Mammary epithelial cell (primary cell): ENCODE measurements at regions of chr10 and their contacts with region 1.

Region 1: DNA sequence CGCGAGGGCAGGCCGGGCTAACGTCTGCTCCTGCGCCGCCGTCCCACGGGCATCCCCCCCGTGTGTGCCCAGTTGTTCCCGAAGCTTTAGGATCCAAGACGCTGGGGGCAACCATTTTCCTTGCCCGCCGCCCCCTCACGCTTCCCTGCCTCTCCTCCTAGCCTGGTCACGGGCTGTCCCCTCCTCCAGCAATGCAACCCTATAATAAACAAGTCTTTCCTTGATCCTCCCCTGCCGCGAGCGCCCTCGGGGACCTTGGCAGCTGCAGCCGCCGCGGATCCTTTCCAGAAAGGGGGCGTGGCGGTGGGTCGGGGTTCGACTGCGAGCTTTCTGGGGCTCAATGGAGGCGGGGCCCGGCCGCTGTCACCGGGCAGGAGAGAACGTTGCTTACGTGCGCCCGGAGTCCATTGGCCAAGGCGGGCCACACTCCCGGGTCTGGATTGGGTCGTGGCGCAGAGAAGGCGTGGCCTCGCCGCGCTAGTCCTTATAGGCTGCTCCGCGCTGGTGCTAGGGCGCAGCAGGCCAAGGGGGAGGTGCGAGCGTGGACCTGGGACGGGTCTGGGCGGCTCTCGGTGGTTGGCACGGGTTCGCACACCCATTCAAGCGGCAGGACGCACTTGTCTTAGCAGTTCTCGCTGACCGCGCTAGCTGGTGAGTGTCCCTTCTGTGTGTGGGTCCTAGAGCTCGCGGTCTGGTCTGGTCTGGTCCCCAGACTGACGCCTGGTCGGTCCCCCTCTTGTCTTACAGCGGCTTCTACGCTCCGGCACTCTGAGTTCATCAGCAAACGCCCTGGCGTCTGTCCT is at the start of gene DDIT4:
- DNase-seq: peak; percentile 99
- H3K4me3 ChIP-seq: peak within 1 kb of the TSS; percentile 59 to 78 (median 66)
- H3K27ac ChIP-seq: peak within 1 kb of the TSS; percentile 93
- H3K4me1 ChIP-seq: peaks cover 27% of the 10 kb centered on the region
- H3K27me3 ChIP-seq: no peaks in the 10 kb centered on the region
- CTCF ChIP-seq: no peak
- total RNA-seq, gene DDIT4: 772 to 1,235 TPM

Region 2: DNA sequence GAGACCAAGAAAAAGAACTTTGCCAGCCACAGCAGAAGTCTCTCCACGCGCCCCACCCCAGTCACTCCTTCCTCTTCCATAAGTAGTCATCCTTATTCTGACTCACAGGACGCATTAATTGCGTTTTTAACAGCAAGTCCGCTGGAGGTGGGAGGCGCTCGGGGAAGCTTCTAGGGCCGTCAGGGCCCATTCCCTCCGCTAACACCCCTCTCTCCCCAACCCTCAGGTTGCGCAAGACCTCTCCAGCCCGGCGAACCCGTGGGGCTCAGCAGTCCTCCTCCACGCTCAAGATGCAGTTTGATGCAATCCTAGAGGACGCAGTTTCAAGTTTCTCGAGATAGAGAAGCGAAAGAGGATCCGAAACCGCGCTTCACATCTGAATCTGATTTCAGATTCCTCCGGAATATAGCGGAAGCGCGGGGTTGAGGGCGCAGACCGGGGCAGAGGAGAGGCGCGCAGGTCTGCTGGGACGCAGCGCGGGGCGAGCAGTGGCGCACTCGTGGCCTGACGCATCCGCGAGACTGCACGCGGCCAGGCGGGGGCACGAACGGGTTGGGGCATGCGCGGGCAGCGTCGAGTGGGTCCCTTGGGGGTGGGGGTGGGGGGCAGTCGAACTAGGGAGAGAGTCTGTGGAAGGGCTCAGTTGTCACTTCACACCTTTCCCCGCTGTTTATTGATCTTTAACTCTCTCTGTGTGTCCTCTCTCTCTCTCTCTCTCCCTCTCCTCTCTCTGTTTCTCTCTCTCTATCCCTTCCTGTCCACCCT is 384.8 kb before region 1 on chr10:
- CTCF ChIA-PET with region 1: no interaction called
- dilution Hi-C with region 1: no loop called
- in situ Hi-C with region 1: no loop called
- intact Hi-C with region 1: no loop called
- DNase-seq: peak; percentile 78
- H3K4me3 ChIP-seq: peak overlapping the region; percentile 56 to 59 (median 56)
- H3K27ac ChIP-seq: peak overlapping the region; percentile 84
- H3K4me1 ChIP-seq: peaks cover 12% of the 10 kb centered on the region
- H3K27me3 ChIP-seq: no peaks in the 10 kb centered on the region
- CTCF ChIP-seq: no peak

Region 3: GRCh38 chr10:72223743-72224101 is 49.9 kb before region 1 on chr10:
- CTCF ChIA-PET with region 1: interaction called, 3 read pairs
- dilution Hi-C with region 1: no loop called
- in situ Hi-C with region 1: no loop called
- intact Hi-C with region 1: loop called (anchors 2 kb)
- DNase-seq: no peak
- H3K4me3 ChIP-seq: no peak overlapping the region
- H3K27ac ChIP-seq: no peak overlapping the region
- H3K4me1 ChIP-seq: peaks cover 5% of the 10 kb centered on the region
- H3K27me3 ChIP-seq: no peaks in the 10 kb centered on the region
- CTCF ChIP-seq: no peak

Region 4: DNA sequence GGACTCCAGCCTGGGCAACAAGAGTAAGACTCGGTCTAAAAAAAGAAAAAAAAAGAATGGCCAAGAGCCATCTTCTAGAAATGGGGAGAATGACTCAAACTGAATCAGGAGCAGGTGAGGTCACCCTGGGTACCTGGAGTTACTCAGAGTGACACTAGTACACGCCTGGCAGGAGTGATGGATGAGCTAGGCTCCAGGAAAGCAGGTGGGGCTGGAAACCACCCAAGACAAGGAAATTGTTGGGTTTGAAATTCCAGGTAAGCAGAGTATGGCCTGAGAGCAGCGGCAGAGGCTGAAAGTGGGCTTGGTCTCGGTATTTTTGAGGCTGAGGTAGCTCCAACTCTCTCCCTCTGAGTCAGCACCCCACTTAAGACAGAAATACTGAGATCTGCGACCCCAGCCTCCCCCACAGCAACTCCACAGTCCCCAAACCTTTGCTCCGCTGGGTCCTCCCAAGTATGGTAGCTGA is 18.6 kb after region 1 on chr10:
- CTCF ChIA-PET with region 1: interaction called, 3 read pairs
- dilution Hi-C with region 1: no loop called
- in situ Hi-C with region 1: no loop called
- intact Hi-C with region 1: loop called (anchors 1 kb)
- DNase-seq: peak; percentile 99
- H3K4me3 ChIP-seq: no peak overlapping the region
- H3K27ac ChIP-seq: peak overlapping the region; percentile 92
- H3K4me1 ChIP-seq: peaks cover 29% of the 10 kb centered on the region
- H3K27me3 ChIP-seq: no peaks in the 10 kb centered on the region
- CTCF ChIP-seq: no peak

Region 5: DNA sequence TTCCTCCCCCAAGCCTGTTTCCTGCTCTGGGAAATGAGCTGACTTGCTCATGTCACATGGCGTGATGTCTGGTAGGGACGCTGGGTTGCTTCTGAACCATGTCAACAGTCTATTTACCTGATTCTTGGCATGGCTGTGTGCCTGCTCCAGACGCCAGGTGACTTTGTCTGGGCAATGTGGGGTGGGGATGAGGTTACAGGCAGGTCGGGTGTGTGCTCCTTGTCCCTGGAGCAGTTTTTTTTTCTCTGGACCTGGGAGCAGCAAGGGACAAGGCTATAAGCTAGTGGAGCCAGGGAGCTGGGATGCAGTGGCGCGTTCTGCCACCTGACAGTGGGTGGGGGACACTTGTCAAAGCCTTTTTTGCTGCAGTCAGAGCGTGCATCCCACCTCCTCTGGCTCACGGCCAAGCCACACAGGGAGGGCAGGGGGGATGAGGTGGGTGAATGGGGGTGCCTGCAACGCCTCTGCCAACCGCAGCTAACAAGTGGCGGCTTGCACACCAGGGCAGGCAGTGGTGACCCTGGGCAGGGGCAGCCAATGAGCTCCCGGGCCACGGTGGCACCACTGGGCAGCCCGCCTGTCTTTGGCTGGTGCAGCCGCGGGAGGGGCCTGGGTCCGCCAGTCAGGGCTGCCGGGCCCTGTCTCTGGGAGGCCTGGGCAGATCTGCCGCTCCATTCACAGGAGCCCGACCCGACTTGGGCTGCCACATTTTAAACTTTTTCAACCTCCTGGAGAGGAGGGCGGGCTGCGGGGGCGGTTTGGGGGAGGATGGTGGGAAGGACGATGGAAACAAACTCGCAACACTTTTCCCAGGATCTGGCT is 58.2 kb after region 1 on chr10:
- CTCF ChIA-PET with region 1: interaction called, 4 read pairs
- dilution Hi-C with region 1: no loop called
- in situ Hi-C with region 1: loop called (anchors 5 to 10 kb)
- intact Hi-C with region 1: loop called (anchors 1 kb)
- DNase-seq: peak; percentile 98
- H3K4me3 ChIP-seq: no peak overlapping the region
- H3K27ac ChIP-seq: peak overlapping the region; percentile 98
- H3K4me1 ChIP-seq: peaks cover 82% of the 10 kb centered on the region
- H3K27me3 ChIP-seq: no peaks in the 10 kb centered on the region
- CTCF ChIP-seq: peak in 1 of 2 donors; percentile 34

Region 6: DNA sequence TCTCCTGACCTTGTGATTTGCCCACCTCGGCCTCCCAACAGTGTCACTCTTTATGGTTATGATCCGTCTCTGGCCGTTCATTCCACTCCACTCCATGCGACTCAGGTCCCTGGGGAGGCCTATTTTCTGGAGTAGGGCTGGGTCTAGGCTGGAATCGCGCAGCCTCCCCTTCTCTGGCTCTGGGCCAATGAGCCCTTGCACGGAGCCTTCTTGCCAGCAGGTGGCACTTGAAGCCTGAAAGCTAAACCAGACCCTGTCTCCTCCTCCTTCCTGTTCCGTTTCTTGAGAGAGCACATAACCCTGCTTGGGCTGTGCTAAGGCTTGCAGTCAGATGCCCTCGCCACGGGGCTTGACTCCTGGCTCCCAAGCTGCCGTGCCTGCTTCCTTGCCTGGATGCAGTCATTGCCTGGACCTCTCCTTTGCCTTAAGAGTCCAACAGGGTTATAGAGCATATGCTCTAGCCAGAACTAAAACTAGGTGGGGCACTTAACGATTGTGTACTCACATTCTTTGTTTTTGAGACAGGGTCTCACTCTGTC is 90.7 kb after region 1 on chr10:
- CTCF ChIA-PET with region 1: no interaction called
- dilution Hi-C with region 1: no loop called
- in situ Hi-C with region 1: no loop called
- intact Hi-C with region 1: no loop called
- DNase-seq: peak; percentile 92
- H3K4me3 ChIP-seq: no peak overlapping the region
- H3K27ac ChIP-seq: peak overlapping the region; percentile 67
- H3K4me1 ChIP-seq: peaks cover 15% of the 10 kb centered on the region
- H3K27me3 ChIP-seq: no peaks in the 10 kb centered on the region
- CTCF ChIP-seq: peak; percentile 97 to 98

Region 7: DNA sequence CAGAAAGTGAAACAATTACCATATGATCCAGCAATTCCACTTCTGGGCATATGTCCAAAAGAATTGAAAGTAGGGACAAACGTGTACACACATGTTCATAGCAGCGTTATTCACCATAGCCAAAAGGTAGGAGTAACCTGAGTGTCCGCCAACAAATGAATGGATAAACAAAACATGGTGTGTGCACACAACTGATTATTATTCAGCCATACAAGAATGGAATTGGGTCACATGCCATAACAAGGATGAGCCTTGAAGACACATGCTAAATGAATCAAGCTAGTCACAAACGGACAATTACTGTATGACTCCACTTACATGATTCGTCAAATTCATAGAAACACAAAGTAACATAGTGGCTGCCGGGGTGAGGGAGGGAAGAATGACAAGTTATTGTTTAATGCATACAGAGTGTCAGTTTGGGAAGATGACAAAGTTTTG is 615.8 kb after region 1 on chr10:
- CTCF ChIA-PET with region 1: no interaction called
- dilution Hi-C with region 1: no loop called
- in situ Hi-C with region 1: no loop called
- intact Hi-C with region 1: loop called (anchors 10 kb)
- DNase-seq: peak; percentile 99
- H3K4me3 ChIP-seq: no peak overlapping the region
- H3K27ac ChIP-seq: peak overlapping the region; percentile 56
- H3K4me1 ChIP-seq: peaks cover 26% of the 10 kb centered on the region
- H3K27me3 ChIP-seq: no peaks in the 10 kb centered on the region
- CTCF ChIP-seq: no peak